ENCODE measurements at regions of chr5 and their contacts with region 1.

Region 1: DNA sequence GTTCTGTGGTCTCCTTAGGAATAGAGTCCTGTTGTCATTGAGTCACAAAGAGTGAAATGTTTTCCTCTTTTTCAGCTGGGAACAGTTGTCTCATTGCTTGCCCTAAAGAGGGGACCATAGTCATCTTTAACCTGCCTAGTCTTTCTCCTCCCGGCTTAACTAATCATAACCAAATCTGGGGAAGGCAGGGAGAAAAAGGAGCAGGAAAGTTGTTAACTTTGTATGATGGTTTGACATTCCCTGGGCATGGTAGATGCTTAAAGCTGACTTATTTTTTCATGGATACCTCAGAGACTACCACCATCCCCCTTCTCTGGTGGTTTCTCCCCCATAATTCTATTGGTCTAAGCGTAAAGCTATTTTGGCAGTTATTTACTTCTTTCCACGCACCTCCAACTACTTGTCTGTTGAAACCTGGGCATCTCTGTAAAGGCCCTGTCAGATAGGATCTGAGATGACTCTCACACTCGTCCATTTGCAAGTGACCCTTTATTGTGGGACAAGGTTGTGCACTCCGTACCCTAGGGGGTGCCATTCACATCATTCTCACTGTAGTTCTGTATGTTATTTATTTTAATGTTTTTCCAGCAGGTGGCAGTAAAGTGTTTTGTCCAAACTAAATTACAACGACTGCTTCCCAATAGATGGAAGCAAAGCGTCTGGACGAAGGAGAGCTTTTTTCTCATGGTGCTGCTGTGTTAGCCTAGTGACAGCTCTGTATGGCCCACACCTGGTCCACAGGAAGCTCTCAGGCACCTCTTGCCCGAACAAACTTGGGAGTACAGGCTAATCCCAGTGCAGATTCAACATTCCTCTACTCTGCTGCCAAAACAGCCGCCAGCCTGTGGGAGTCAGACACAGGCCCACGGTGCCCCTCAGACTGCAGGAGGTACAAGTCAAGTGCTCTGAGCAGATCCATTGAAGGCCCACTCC is 3.0 kb upstream of the FAM13B start:
- DNase-seq: peak; percentile 75
- H3K4me3 ChIP-seq: peak overlapping the region in 1 of 2 experiments; percentile 38; a peak in 1 of 4 replicates
- H3K27ac ChIP-seq: peak overlapping the region; percentile 2 to 50; a peak in 3 of 4 replicates
- H3K4me1 ChIP-seq: peaks cover 6 to 12% of the 10 kb centered on the region in 2 experiments; a peak in 3 of 4 replicates
- H3K27me3 ChIP-seq: no peaks in the 10 kb centered on the region
- CTCF ChIP-seq: peak; percentile 93
- EP300 ChIP-seq: no peak
- RAD21 ChIP-seq: peak; percentile 78

Region 2: DNA sequence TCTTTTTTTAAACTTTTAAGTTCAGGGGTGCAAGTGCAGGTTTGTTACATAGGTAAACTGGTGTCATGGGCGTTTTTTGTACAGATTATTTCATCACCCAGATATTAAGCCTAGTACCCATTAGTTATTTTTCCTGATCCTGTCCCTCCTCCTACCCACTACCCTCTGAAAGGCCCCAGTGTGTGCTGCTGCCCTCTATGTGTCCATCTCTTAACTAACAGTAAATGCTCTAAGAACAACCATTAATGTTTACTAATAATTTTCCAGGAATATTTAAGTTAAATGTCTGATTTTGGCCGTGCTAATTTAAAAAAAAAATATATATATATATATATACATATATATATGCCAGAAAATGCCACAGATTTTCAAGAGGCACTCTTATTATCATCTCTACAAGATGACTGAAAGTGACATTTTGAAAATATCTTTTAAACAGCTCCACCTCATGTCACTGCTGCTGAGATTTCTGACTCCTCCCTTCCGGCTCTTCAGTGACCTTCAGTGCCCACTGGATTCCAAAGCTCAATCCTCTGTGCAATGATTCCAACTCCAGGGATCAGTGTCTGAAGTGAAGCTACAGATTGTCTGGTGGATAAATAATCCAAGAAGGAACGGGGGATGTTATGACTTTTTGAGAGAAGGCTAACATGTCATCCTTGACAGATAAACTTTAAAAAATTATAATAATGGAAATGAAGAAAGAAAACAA is 235.0 kb before region 1 on chr5:
- CTCF ChIA-PET with region 1: no interaction called
- POLR2A ChIA-PET with region 1: no interaction called
- DNase-seq: no peak
- H3K4me3 ChIP-seq: no peak overlapping the region
- H3K27ac ChIP-seq: no peak overlapping the region
- H3K4me1 ChIP-seq: no peaks in the 10 kb centered on the region; a peak in 1 of 4 replicates
- H3K27me3 ChIP-seq: no peaks in the 10 kb centered on the region
- CTCF ChIP-seq: no peak
- EP300 ChIP-seq: no peak
- RAD21 ChIP-seq: no peak

Region 3: GRCh38 chr5:137831526-137831925 is 204.3 kb before region 1 on chr5:
- CTCF ChIA-PET with region 1: no interaction called
- POLR2A ChIA-PET with region 1: no interaction called
- DNase-seq: no peak
- H3K4me3 ChIP-seq: no peak overlapping the region
- H3K27ac ChIP-seq: no peak overlapping the region
- H3K4me1 ChIP-seq: peaks cover 0 to 17% of the 10 kb centered on the region in 2 experiments; a peak in 3 of 4 replicates
- H3K27me3 ChIP-seq: no peaks in the 10 kb centered on the region
- CTCF ChIP-seq: peak; percentile 33
- EP300 ChIP-seq: no peak
- RAD21 ChIP-seq: no peak

Region 4: GRCh38 chr5:138054847-138055558 is 19.1 kb after region 1 on chr5:
- CTCF ChIA-PET with region 1: interaction called, 74 read pairs
- POLR2A ChIA-PET with region 1: no interaction called
- DNase-seq: no peak
- H3K4me3 ChIP-seq: no peak overlapping the region
- H3K27ac ChIP-seq: no peak overlapping the region
- H3K4me1 ChIP-seq: no peaks in the 10 kb centered on the region
- H3K27me3 ChIP-seq: no peaks in the 10 kb centered on the region; the same call in 1 of the 2 replicates
- CTCF ChIP-seq: no peak
- EP300 ChIP-seq: no peak
- RAD21 ChIP-seq: no peak

Region 5: GRCh38 chr5:138077065-138077696 is 41.3 kb after region 1 on chr5:
- CTCF ChIA-PET with region 1: interaction called, 25 read pairs
- POLR2A ChIA-PET with region 1: no interaction called
- DNase-seq: peak; percentile 76
- H3K4me3 ChIP-seq: no peak overlapping the region; a peak in 1 of 4 replicates
- H3K27ac ChIP-seq: no peak overlapping the region
- H3K4me1 ChIP-seq: no peaks in the 10 kb centered on the region
- H3K27me3 ChIP-seq: no peaks in the 10 kb centered on the region; the same call in 1 of the 2 replicates
- CTCF ChIP-seq: peak; percentile 90
- EP300 ChIP-seq: no peak
- RAD21 ChIP-seq: peak; percentile 90

Region 6: GRCh38 chr5:138102454-138103318 is 66.8 kb after region 1 on chr5:
- CTCF ChIA-PET with region 1: interaction called, 10 read pairs
- POLR2A ChIA-PET with region 1: no interaction called
- DNase-seq: no peak
- H3K4me3 ChIP-seq: no peak overlapping the region
- H3K27ac ChIP-seq: no peak overlapping the region
- H3K4me1 ChIP-seq: no peaks in the 10 kb centered on the region
- H3K27me3 ChIP-seq: peaks cover 9% of the 10 kb centered on the region; the same call in 1 of the 2 replicates
- CTCF ChIP-seq: no peak
- EP300 ChIP-seq: no peak
- RAD21 ChIP-seq: no peak

Region 7: DNA sequence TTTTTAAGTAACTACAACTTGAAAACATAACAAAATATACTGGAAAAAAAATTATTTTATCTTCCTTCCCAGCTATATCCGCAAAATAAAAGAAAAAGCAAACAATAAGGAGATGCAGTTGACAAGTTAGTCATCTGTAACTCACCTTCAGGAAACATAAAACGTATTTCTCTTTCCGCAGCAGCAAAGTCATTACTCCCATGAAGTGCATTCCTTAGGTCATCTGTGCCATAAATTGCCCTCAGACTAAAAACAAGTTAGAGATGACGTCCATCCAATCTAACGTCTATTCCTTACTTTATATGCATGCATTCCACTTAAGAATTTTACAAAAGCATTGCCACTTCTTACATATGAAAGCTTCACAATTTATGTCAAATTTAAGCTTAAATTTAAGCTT is 92.5 kb after region 1 on chr5:
- CTCF ChIA-PET with region 1: interaction called, 18 read pairs
- POLR2A ChIA-PET with region 1: no interaction called
- DNase-seq: no peak
- H3K4me3 ChIP-seq: no peak overlapping the region
- H3K27ac ChIP-seq: no peak overlapping the region
- H3K4me1 ChIP-seq: no peaks in the 10 kb centered on the region
- H3K27me3 ChIP-seq: no peaks in the 10 kb centered on the region
- CTCF ChIP-seq: no peak
- EP300 ChIP-seq: no peak
- RAD21 ChIP-seq: no peak

Region 8: DNA sequence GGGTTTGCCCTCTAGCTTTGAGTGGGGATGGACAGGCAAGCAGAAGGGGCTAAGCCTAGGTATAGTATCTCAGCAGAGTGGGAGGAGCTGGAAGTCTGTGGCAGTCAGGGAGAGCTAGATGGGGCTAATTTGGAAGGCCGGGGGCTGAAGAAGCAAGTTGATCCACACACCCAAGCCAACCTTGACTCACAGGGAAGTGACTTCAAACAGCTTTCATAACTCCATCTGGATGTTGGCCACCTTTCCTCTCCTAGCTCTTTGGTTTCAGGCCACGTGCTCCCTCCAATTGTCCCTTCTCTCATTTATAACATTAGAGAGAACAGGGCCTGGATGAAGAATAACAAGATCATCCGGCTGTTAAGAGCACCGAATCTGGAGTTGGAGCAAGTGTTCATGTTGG is 466.2 kb after region 1 on chr5:
- CTCF ChIA-PET with region 1: no interaction called
- POLR2A ChIA-PET with region 1: no interaction called
- DNase-seq: no peak
- H3K4me3 ChIP-seq: no peak overlapping the region
- H3K27ac ChIP-seq: no peak overlapping the region
- H3K4me1 ChIP-seq: peaks cover 0 to 6% of the 10 kb centered on the region in 2 experiments; a peak in 1 of 4 replicates
- H3K27me3 ChIP-seq: no peaks in the 10 kb centered on the region
- CTCF ChIP-seq: no peak
- EP300 ChIP-seq: no peak
- RAD21 ChIP-seq: no peak

Measured in SK-N-SH (cell line).